ENCODE measurements at regions of chr2 and their contacts with region 1.

Region 1: DNA sequence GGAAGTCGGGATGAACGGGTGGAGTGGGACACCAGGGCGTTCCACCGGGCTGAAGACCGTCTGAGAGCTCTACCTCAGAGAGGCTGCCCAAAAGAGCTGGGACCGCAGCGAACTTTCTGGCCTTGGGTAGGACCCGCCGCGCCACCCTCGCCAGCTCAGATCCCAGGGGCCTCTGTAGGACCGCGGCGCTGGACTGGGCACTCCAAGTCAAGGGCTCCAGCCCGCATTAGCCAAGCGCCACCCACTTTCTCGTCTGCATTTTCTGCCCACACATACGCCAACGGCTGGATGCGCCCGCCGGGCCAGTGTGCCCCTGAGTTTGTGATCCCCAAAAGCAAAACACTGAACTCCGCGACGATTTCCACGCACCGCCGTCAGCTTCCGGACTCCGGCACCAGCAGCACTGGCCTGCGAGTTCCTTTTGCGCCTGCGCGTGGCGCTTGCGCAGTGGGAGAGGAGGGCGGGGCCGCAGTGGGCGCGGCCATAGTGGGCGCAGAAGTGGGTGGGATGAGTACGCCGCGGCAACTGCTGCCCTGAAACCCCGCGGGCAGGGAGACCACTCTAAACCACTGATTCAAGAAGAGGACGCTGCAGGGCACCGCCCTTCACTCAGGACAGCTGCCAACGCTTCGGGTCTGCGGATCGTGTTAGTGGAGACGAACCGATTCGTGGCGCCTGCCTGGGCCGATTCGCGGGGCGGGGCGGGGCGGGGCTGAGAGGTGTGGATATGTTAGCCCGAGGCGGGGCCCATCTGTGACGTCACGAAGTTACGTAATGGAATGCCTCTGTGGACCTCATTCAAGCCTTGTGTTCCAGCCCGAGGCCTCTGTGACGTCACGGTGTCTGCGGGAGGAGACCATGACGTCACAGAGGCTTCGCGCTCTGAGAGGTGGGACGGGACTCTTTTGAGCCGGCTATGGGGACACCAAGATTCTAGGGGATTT is 10.5 kb downstream of the OSR1 start:
- DNase-seq: peak; percentile 96
- H3K4me3 Mint-ChIP-seq: peak overlapping the region; percentile 95
- H3K27ac Mint-ChIP-seq: peak overlapping the region; percentile 98
- H3K4me1 Mint-ChIP-seq: no peaks in the 10 kb centered on the region
- H3K27me3 Mint-ChIP-seq: no peaks in the 10 kb centered on the region
- CTCF ChIP-seq: no peak

Region 2: GRCh38 chr2:18883616-18884456 is 464.1 kb before region 1 on chr2:
- CTCF ChIA-PET with region 1: no interaction called
- intact Hi-C with region 1: loop called (anchors 1 kb)
- DNase-seq: peak; percentile 54
- H3K4me3 Mint-ChIP-seq: no peak overlapping the region
- H3K27ac Mint-ChIP-seq: no peak overlapping the region
- H3K4me1 Mint-ChIP-seq: peaks cover 8% of the 10 kb centered on the region
- H3K27me3 Mint-ChIP-seq: no peaks in the 10 kb centered on the region
- CTCF ChIP-seq: no peak

Region 3: GRCh38 chr2:18987592-18988073 is 360.3 kb before region 1 on chr2:
- CTCF ChIA-PET with region 1: no interaction called
- intact Hi-C with region 1: loop called (anchors 5 kb)
- DNase-seq: peak; percentile 64
- H3K4me3 Mint-ChIP-seq: no peak overlapping the region
- H3K27ac Mint-ChIP-seq: no peak overlapping the region
- H3K4me1 Mint-ChIP-seq: peaks cover 14% of the 10 kb centered on the region
- H3K27me3 Mint-ChIP-seq: no peaks in the 10 kb centered on the region
- CTCF ChIP-seq: no peak

Region 4: DNA sequence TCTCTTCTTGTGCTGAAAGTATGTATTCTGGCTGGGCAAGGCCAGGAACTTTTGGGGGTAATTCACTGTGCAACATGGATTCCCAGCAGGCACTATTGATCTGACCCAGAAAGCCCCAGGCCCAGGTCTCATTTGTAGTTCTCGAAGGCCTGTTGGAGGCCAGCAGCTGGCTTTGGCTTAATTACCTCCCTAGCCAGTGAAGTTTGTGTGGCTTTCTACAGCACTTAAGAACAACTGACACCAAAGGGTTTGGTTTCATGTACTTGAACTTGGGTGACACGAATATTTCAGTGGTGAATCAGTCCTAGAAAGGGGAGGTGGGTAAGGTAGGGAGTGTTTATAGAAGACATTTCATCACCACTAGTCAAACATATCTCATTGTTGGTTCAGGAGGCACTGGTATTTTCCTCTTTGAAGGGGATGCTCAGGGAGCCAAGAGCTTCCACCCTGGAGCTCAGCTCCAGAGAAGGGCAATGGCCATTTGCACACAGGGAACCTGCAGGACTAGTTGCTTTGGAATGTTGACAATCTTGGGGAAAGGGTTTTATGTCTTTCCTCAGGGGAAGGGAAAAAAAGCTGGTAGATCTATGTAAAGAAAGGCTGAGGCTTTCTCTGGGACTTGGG is 207.2 kb before region 1 on chr2:
- CTCF ChIA-PET with region 1: no interaction called
- intact Hi-C with region 1: loop called (anchors 10 kb)
- DNase-seq: peak; percentile 66
- H3K4me3 Mint-ChIP-seq: peak overlapping the region; percentile 44
- H3K27ac Mint-ChIP-seq: peak overlapping the region; percentile 59
- H3K4me1 Mint-ChIP-seq: peaks cover 39% of the 10 kb centered on the region
- H3K27me3 Mint-ChIP-seq: no peaks in the 10 kb centered on the region
- CTCF ChIP-seq: no peak

Region 5: GRCh38 chr2:19600506-19600905 is 252.6 kb after region 1 on chr2:
- CTCF ChIA-PET with region 1: no interaction called
- intact Hi-C with region 1: no loop called
- DNase-seq: no peak
- H3K4me3 Mint-ChIP-seq: no peak overlapping the region
- H3K27ac Mint-ChIP-seq: no peak overlapping the region
- H3K4me1 Mint-ChIP-seq: no peaks in the 10 kb centered on the region
- H3K27me3 Mint-ChIP-seq: no peaks in the 10 kb centered on the region
- CTCF ChIP-seq: no peak

Measured in Calu3 (cell line).